Esophagus muscularis mucosa (tissue), 4 donors: ENCODE measurements at regions of chr5 and their contacts with region 1.

Region 1: GRCh38 chr5:91110686-91111085 is 272.4 kb downstream of the ARRDC3 start:
- DNase-seq: no peak
- H3K4me3 ChIP-seq: peak overlapping the region in 3 of 4 donors; percentile 2 to 11 (median 5)
- H3K27ac ChIP-seq: peak overlapping the region; percentile 71 to 81 (median 72)
- H3K4me1 ChIP-seq: peaks cover 28 to 45% (median 35%) of the 10 kb centered on the region in 4 donors
- H3K27me3 ChIP-seq: no peaks in the 10 kb centered on the region
- CTCF ChIP-seq: no peak
- EP300 ChIP-seq: peak; percentile 44
- POLR2A ChIP-seq: no peak

Region 2: GRCh38 chr5:90956511-90957097 is 154.1 kb before region 1 on chr5:
- intact Hi-C with region 1: no loop called
- DNase-seq: no peak
- H3K4me3 ChIP-seq: no peak overlapping the region
- H3K27ac ChIP-seq: no peak overlapping the region
- H3K4me1 ChIP-seq: peaks cover 0 to 9% (median 2%) of the 10 kb centered on the region in 4 donors
- H3K27me3 ChIP-seq: no peaks in the 10 kb centered on the region
- CTCF ChIP-seq: no peak
- EP300 ChIP-seq: no peak
- POLR2A ChIP-seq: no peak

Region 3: GRCh38 chr5:91151947-91152346 is 41.3 kb after region 1 on chr5:
- intact Hi-C with region 1: loop called (anchors 5 kb)
- DNase-seq: no peak
- H3K4me3 ChIP-seq: no peak overlapping the region
- H3K27ac ChIP-seq: peak overlapping the region in 2 of 4 donors; percentile 16 to 20
- H3K4me1 ChIP-seq: peaks cover 14 to 38% (median 29%) of the 10 kb centered on the region in 4 donors
- H3K27me3 ChIP-seq: no peaks in the 10 kb centered on the region
- CTCF ChIP-seq: no peak
- EP300 ChIP-seq: no peak
- POLR2A ChIP-seq: no peak